ENCODE measurements at regions of chr3 and their contacts with region 1.

Region 1: DNA sequence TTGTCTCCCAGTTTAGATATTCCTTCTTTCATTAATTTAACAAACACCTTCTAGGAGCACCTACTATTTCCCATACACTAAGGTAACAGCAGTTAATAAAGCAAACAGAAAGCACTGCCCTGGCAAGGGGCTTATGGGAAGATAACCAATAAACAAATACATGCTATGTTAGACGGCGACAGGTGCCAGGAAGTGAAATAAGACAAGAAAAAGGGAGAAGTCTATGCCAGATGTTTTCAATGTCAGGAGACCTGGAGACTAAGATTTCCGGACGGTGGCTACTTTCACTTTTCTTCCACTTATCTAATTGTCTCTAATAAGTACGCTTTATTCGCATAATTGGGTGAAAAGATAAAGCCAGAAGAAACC is 32.5 kb upstream of the ZNF445 start:
- DNase-seq: no peak
- ATAC-seq: peak; percentile 27
- H3K4me3 ChIP-seq: peak overlapping the region; percentile 68 to 74
- H3K27ac ChIP-seq: peak overlapping the region; percentile 58
- H3K4me1 ChIP-seq: peaks cover 6 to 17% of the 10 kb centered on the region in 2 experiments; a peak in 3 of 4 replicates
- H3K27me3 ChIP-seq: no peaks in the 10 kb centered on the region
- CTCF ChIP-seq: no peak
- POLR2A ChIP-seq: no peak
- RAD21 ChIP-seq: no peak

Region 2: GRCh38 chr3:44338010-44338827 is 171.8 kb before region 1 on chr3 and contains the start of gene TCAIM:
- CTCF ChIA-PET with region 1: interaction called, 4 read pairs
- POLR2A ChIA-PET with region 1: interaction called, 4 read pairs
- RAD21 ChIA-PET with region 1: no interaction called
- intact Hi-C with region 1: loop called (anchors 5 kb)
- DNase-seq: peak; percentile 94
- ATAC-seq: peak; percentile 95
- H3K4me3 ChIP-seq: peak within 1 kb of the TSS; percentile 77 to 80
- H3K27ac ChIP-seq: peak within 1 kb of the TSS; percentile 84
- H3K4me1 ChIP-seq: peaks cover 7 to 21% of the 10 kb centered on the region in 2 experiments; a peak in 3 of 4 replicates
- H3K27me3 ChIP-seq: no peaks in the 10 kb centered on the region; the same call in 1 of the 2 replicates
- CTCF ChIP-seq: no peak
- POLR2A ChIP-seq: no peak
- RAD21 ChIP-seq: no peak
- total RNA-seq, gene TCAIM: 18.4 TPM

Region 3: DNA sequence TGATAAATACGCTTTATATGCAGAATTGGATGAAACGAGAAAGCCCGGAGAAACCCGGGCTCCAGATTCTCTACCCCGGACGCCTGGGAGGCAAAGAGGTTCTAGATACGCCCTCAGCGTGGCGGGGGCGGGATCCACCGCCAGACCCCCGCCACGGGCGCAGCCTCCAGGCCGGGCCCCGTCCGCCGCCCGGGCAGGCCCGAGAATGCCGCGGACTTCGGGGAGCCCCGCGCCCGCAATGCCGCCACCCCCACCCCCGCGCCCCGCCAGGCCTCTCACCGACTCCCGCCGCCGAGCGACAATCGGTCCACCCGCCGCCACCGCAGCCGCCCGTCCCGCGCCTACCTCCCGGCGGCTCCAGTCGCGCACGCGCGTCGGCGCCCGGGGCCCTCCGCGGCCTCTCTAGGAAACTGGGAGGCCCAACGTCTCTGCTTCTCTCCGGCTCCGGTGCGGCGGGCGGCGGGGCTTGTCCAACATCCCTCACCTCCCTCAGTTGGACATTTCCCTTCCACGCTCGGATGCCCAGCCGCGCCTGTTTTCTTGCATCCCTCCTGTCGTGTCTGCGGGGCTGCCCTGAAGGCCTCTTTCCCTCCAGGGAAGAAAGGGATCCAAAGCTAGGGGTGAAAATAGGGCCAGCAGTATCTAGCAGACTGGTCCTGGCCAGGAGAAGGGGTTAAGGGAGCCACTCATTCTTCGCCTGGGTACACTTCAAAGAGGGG is 32.5 kb before region 1 on chr3 and contains the start of gene ZNF445:
- CTCF ChIA-PET with region 1: no interaction called
- POLR2A ChIA-PET with region 1: no interaction called
- RAD21 ChIA-PET with region 1: no interaction called
- intact Hi-C with region 1: loop called (anchors 5 kb)
- DNase-seq: peak; percentile 48
- ATAC-seq: peak; percentile 96
- H3K4me3 ChIP-seq: peak within 1 kb of the TSS; percentile 79
- H3K27ac ChIP-seq: no peak within 1 kb of the TSS
- H3K4me1 ChIP-seq: peaks cover 6 to 22% of the 10 kb centered on the region in 2 experiments; a peak in 3 of 4 replicates
- H3K27me3 ChIP-seq: no peaks in the 10 kb centered on the region
- CTCF ChIP-seq: no peak
- POLR2A ChIP-seq: peak; percentile 58
- RAD21 ChIP-seq: no peak
- total RNA-seq, gene ZNF445: 19.9 TPM

Region 4: DNA sequence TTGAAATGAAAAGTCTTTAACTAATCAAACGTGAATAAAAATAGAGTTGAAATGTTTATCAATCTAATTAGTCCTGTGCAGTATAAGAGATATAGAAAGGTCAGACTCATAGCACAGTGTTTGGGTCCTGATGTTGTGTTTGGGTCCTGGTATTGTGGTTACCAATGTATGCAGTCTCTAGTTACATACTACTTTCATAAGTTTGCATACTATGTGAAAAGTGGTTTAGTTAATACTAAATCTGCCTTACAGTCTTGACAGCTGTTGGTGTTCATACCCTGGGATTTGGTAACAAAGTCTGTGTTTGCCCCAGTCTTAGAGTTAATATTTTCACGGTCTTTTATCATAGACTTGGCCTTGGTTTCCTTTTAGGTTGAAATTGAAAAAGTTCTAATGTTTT is 293.3 kb after region 1 on chr3:
- CTCF ChIA-PET with region 1: no interaction called
- POLR2A ChIA-PET with region 1: no interaction called
- RAD21 ChIA-PET with region 1: no interaction called
- intact Hi-C with region 1: no loop called
- DNase-seq: no peak
- ATAC-seq: no peak
- H3K4me3 ChIP-seq: no peak overlapping the region
- H3K27ac ChIP-seq: no peak overlapping the region
- H3K4me1 ChIP-seq: no peaks in the 10 kb centered on the region
- H3K27me3 ChIP-seq: no peaks in the 10 kb centered on the region
- CTCF ChIP-seq: no peak
- POLR2A ChIP-seq: no peak
- RAD21 ChIP-seq: no peak